CD4-positive, alpha-beta T cell (primary cell): ENCODE measurements at regions of chr19 and their contacts with region 1.

Region 1: GRCh38 chr19:40603389-40604135 is 2.4 kb downstream of the LTBP4 start:
- DNase-seq: peak; percentile 91 to 99 (median 97)
- ATAC-seq: peak; percentile 72
- H3K4me3 ChIP-seq: peak overlapping the region; percentile 66
- H3K4me3 Mint-ChIP-seq: peak overlapping the region; percentile 88
- H3K27ac ChIP-seq: peak overlapping the region in 1 of 2 donors; percentile 49
- H3K27ac Mint-ChIP-seq: peak overlapping the region; percentile 88
- H3K4me1 ChIP-seq: peaks cover 93% of the 10 kb centered on the region
- H3K4me1 Mint-ChIP-seq: peaks cover 79% of the 10 kb centered on the region
- H3K27me3 ChIP-seq: peaks cover 29 to 33% of the 10 kb centered on the region in 2 experiments
- H3K27me3 Mint-ChIP-seq: peaks cover 38% of the 10 kb centered on the region
- CTCF ChIP-seq: no peak

Region 2: GRCh38 chr19:40285353-40286234 is 318.0 kb before region 1 on chr19:
- CTCF ChIA-PET with region 1: no interaction called
- POLR2A ChIA-PET with region 1: no interaction called
- intact Hi-C with region 1: loop called in 1 of 2 experiments (anchors 5 kb)
- DNase-seq: peak; percentile 94 to 100 (median 98)
- ATAC-seq: peak; percentile 75
- H3K4me3 ChIP-seq: peak overlapping the region; percentile 68
- H3K4me3 Mint-ChIP-seq: peak overlapping the region; percentile 89
- H3K27ac ChIP-seq: peak overlapping the region; percentile 78 to 90
- H3K27ac Mint-ChIP-seq: peak overlapping the region; percentile 93
- H3K4me1 ChIP-seq: peaks cover 52% of the 10 kb centered on the region
- H3K4me1 Mint-ChIP-seq: peaks cover 46% of the 10 kb centered on the region
- H3K27me3 ChIP-seq: no peaks in the 10 kb centered on the region
- H3K27me3 Mint-ChIP-seq: no peaks in the 10 kb centered on the region
- CTCF ChIP-seq: no peak

Region 3: DNA sequence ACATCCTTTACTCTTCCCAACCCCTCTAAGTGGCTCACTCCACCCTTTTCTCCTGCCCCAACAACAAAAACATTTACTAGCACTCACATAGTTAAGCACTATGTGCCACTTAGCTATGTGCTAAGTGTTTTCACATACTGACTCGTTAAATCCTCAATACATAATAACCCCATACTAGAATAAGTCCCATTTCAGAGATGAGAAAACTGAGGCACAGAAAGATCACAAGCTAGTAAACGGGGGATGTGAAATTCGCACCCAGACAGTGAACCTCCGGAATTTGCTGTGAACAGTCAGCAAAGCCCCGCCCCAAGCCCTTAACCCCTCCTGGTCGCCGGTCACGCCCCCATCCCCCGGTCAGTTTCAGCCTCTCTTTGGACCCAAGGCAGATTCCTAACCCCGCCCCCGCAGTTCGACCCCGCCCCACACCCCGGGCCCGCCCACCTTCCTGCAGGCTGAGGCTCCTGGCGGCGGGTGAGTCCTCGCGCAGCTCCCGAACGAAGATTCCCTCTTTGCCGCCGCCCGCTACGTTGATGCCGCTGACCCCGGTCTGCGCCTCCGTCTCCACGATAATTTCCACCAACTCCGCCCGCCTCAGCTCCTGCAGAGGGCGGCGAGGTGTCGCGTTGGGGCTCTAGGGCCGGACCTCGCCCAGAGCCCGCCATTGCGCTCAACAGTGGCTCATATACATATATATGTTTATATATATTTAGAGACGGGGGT is 200.1 kb before region 1 on chr19:
- CTCF ChIA-PET with region 1: interaction called, 3 read pairs
- POLR2A ChIA-PET with region 1: interaction called, 5 read pairs
- intact Hi-C with region 1: loop called in 1 of 2 experiments (anchors 5 kb)
- DNase-seq: peak; percentile 46 to 89 (median 70)
- ATAC-seq: peak; percentile 45
- H3K4me3 ChIP-seq: peak overlapping the region; percentile 88
- H3K4me3 Mint-ChIP-seq: peak overlapping the region; percentile 94
- H3K27ac ChIP-seq: peak overlapping the region; percentile 22 to 56
- H3K27ac Mint-ChIP-seq: peak overlapping the region; percentile 64
- H3K4me1 ChIP-seq: peaks cover 34% of the 10 kb centered on the region
- H3K4me1 Mint-ChIP-seq: peaks cover 35% of the 10 kb centered on the region
- H3K27me3 ChIP-seq: no peaks in the 10 kb centered on the region
- H3K27me3 Mint-ChIP-seq: no peaks in the 10 kb centered on the region
- CTCF ChIP-seq: no peak

Region 4: DNA sequence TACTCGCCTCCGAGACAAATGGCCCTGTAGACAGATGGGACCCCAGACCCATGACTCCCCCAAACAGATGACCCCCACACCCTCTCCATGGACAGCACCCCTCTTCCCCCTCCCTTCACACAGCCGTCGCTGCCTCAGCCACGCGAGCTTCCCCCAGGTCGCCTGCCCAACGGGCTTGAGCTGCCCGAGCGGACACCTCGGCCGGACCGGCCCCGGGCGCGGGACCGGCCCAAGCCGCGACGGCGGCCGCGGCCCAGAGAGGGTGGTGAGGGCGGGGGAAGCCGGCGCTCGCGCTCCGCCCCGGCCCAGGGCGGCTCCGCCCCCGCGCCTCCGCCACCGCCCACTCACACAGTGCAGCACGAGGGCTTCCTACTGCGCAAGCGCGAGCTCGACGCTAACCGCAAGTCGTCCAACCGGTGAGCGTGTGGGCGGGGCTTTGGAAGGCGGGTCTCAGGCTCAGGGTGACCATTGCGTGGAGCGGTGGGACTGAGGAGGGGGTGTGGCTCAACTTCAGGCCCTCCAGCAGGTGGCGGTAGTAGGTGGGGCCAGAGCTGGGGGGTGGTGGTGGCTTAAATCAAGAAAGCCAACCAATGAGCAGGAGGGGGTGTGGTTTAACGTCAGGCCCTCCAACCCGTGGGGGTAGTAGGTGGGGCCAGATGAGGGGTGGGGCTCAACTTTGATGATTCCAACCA is 33.1 kb before region 1 on chr19:
- CTCF ChIA-PET with region 1: interaction called, 5 read pairs
- POLR2A ChIA-PET with region 1: interaction called, 13 read pairs
- intact Hi-C with region 1: loop called in 1 of 2 experiments (anchors 5 kb)
- DNase-seq: peak; percentile 88 to 100 (median 96)
- ATAC-seq: peak; percentile 86
- H3K4me3 ChIP-seq: peak overlapping the region; percentile 40
- H3K4me3 Mint-ChIP-seq: peak overlapping the region; percentile 80
- H3K27ac ChIP-seq: peak overlapping the region in 1 of 2 donors; percentile 9
- H3K27ac Mint-ChIP-seq: peak overlapping the region; percentile 22
- H3K4me1 ChIP-seq: peaks cover 35% of the 10 kb centered on the region
- H3K4me1 Mint-ChIP-seq: peaks cover 27% of the 10 kb centered on the region
- H3K27me3 ChIP-seq: peaks cover 21 to 22% of the 10 kb centered on the region in 2 experiments
- H3K27me3 Mint-ChIP-seq: peaks cover 34% of the 10 kb centered on the region
- CTCF ChIP-seq: no peak

Region 5: GRCh38 chr19:40640744-40641143 is 37.2 kb after region 1 on chr19:
- CTCF ChIA-PET with region 1: interaction called, 37 read pairs
- POLR2A ChIA-PET with region 1: no interaction called
- intact Hi-C with region 1: loop called in 1 of 2 experiments (anchors 2 kb)
- DNase-seq: peak in 2 of 14 experiments; percentile 37 to 40
- ATAC-seq: peak; percentile 37
- H3K4me3 ChIP-seq: no peak overlapping the region
- H3K4me3 Mint-ChIP-seq: no peak overlapping the region
- H3K27ac ChIP-seq: no peak overlapping the region
- H3K27ac Mint-ChIP-seq: no peak overlapping the region
- H3K4me1 ChIP-seq: peaks cover 11% of the 10 kb centered on the region
- H3K4me1 Mint-ChIP-seq: peaks cover 7% of the 10 kb centered on the region
- H3K27me3 ChIP-seq: peaks cover 0 to under 1% of the 10 kb centered on the region in 2 experiments
- H3K27me3 Mint-ChIP-seq: no peaks in the 10 kb centered on the region
- CTCF ChIP-seq: no peak